Left ventricle myocardium inferior (tissue), 1 donor: ENCODE measurements at regions of chr15 and their contacts with region 1.

Region 1: DNA sequence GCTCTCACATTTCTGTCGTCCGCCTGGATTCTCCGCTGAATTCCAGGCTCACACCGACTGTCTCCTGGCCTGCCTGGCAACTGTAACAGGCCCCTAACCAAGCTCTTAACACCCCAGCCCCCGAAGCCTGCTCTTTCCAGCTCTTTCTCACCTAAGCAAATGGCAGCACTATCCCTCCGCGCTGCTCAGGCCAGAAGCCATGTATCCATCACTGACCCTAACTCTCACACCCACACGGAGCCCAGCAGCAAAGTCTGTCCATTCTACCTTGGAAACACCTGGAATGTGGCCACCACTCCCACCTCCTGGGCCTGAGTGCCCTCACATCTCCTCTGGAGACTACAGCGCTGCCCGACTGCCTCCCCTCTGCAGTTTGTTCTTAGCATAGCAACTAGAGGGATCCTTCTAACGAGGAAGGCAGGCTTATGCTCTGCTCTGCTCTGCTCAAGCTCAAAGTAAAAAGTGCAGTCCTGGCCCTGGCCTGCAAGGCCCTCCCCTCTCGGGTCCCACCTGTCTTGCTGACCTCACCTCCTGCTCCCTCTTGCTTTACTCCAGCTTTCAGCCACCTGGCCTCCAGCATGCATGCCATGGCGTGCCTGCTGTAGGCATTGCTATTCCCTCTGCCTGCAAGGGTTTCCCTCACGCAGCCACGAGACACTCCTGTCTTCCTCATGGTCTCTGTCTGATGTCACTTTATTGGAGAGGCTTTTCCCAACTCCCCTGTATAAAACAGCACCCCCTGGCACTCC is 27.2 kb downstream of the FEM1B start:
- DNase-seq: no peak
- H3K4me3 ChIP-seq: no peak overlapping the region
- H3K27ac ChIP-seq: no peak overlapping the region
- H3K4me1 ChIP-seq: peaks cover 8% of the 10 kb centered on the region
- H3K27me3 ChIP-seq: no peaks in the 10 kb centered on the region
- CTCF ChIP-seq: no peak

Region 2: GRCh38 chr15:68383161-68384074 is 78.7 kb after region 1 on chr15:
- intact Hi-C with region 1: loop called (anchors 5 kb)
- DNase-seq: no peak
- H3K4me3 ChIP-seq: no peak overlapping the region
- H3K27ac ChIP-seq: no peak overlapping the region
- H3K4me1 ChIP-seq: peaks cover 4% of the 10 kb centered on the region
- H3K27me3 ChIP-seq: no peaks in the 10 kb centered on the region
- CTCF ChIP-seq: peak; percentile 91

Region 3: DNA sequence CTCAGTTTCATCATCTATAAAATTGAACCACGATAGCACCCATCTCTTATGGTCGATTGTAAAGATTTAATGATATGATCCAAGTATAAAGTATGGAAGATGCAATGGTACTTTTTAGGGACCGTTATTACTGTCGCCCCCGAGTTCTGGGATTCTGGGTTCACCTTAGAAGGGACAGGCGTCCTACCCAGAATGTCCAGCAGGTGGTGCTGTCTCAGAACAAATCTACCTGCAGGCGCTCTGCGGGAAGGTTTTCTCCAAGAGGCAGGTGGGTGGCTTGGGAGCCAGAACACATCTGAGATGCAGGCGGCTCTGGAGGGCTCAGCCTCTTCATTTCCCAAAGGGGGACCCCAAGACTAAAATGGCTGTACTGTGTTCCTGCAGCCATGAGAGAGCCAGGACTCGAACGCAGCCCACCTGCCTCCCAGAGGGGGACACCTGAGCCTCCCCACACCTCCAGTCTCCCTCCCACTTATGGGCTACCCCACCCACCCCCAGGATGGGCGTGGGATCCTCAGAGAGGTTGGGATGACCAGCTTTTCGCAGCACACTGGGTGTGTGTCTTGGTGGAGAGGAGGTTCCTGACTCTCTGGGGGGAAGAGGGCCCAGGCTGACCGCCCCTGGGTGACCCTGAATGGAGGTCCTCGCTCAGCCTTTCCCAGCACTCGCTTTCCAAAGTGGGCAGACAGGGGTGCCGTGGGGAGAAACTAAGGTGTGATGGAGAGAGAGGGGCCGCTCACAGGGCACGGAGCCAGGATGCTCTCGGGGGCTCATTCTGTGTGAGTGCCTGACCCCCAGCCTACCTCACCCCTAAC is 245.9 kb after region 1 on chr15:
- intact Hi-C with region 1: loop called (anchors 5 kb)
- DNase-seq: peak; percentile 70
- H3K4me3 ChIP-seq: no peak overlapping the region
- H3K27ac ChIP-seq: no peak overlapping the region
- H3K4me1 ChIP-seq: peaks cover 4% of the 10 kb centered on the region
- H3K27me3 ChIP-seq: no peaks in the 10 kb centered on the region
- CTCF ChIP-seq: peak; percentile 96